Naive thymus-derived CD4-positive, alpha-beta T cell (primary cell): ENCODE measurements at regions of chr14 and their contacts with region 1.

Region 1: GRCh38 chr14:55129428-55130195 is 560 bp downstream of the LGALS3 start:
- DNase-seq: peak in 8 of 9 donors; percentile 5 to 59 (median 16)
- ATAC-seq: peak; percentile 64
- H3K4me3 ChIP-seq: peak overlapping the region; percentile 19
- H3K4me3 Mint-ChIP-seq: peak overlapping the region; percentile 4 to 85 (median 64)
- H3K27ac ChIP-seq: no peak overlapping the region
- H3K27ac Mint-ChIP-seq: peak overlapping the region in 1 of 9 donors; percentile 60
- H3K4me1 ChIP-seq: peaks cover 0 to 13% of the 10 kb centered on the region in 2 donors
- H3K4me1 Mint-ChIP-seq: peaks cover 0 to 45% (median 8%) of the 10 kb centered on the region in 7 donors
- H3K27me3 ChIP-seq: no peaks in the 10 kb centered on the region
- H3K27me3 Mint-ChIP-seq: peaks cover 17 to 60% (median 41%) of the 10 kb centered on the region in 5 donors

Region 2: GRCh38 chr14:54058505-54058904 is 1071.1 kb before region 1 on chr14:
- CTCF ChIA-PET with region 1: no interaction called
- POLR2A ChIA-PET with region 1: no interaction called
- intact Hi-C with region 1: no loop called
- DNase-seq: no peak
- ATAC-seq: no peak
- H3K4me3 ChIP-seq: no peak overlapping the region
- H3K4me3 Mint-ChIP-seq: no peak overlapping the region
- H3K27ac ChIP-seq: no peak overlapping the region
- H3K27ac Mint-ChIP-seq: no peak overlapping the region
- H3K4me1 ChIP-seq: no peaks in the 10 kb centered on the region
- H3K4me1 Mint-ChIP-seq: no peaks in the 10 kb centered on the region
- H3K27me3 ChIP-seq: no peaks in the 10 kb centered on the region
- H3K27me3 Mint-ChIP-seq: peaks cover 0 to 11% (median 0%) of the 10 kb centered on the region in 5 donors

Region 3: GRCh38 chr14:55085060-55085660 is 44.5 kb before region 1 on chr14:
- CTCF ChIA-PET with region 1: interaction called, 4 read pairs
- POLR2A ChIA-PET with region 1: no interaction called
- intact Hi-C with region 1: loop called in 1 of 2 experiments (anchors 2 kb)
- DNase-seq: no peak
- ATAC-seq: no peak
- H3K4me3 ChIP-seq: no peak overlapping the region
- H3K4me3 Mint-ChIP-seq: no peak overlapping the region
- H3K27ac ChIP-seq: no peak overlapping the region
- H3K27ac Mint-ChIP-seq: no peak overlapping the region
- H3K4me1 ChIP-seq: no peaks in the 10 kb centered on the region
- H3K4me1 Mint-ChIP-seq: peaks cover 0 to 4% (median 0%) of the 10 kb centered on the region in 7 donors
- H3K27me3 ChIP-seq: no peaks in the 10 kb centered on the region
- H3K27me3 Mint-ChIP-seq: peaks cover 0 to 11% (median 0%) of the 10 kb centered on the region in 5 donors

Region 4: DNA sequence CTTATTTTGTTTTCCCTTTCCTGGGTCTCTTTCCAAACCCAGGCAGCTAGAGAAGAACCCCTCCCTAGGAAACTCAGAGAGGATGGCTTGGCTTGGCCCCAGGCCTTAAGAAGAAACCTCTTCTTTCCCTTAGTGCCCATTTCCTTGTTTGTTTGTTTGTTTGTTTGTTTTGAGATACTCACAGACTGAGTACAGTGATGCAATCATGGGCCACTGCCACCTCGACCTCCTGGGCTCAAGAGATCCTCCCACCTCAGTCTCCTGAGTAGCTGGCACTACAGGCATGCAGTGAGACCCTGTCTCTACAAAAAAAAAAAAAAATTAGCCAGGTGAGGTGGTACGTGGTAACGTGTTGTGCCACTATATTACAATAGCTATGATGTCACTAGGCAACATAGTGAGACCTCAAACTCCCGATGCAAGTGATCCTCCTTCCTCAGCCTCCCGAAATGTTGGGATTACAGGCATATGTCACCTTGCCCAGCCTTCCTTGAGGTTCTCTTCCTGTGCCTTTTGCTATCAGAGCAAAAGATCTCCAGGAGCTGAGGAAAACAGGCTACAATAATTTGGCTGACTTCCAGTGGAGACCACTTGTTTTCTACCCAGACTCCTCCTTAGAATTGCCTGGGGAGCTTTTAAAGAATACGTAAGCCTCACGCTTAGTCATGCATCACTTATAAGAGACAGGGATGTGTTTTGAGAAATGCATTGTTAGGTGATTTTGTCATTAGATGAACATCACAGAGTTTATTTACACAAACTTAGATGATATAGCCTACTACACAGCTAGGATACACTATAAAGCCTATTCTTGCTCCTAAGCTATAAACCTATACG is 35.1 kb before region 1 on chr14:
- CTCF ChIA-PET with region 1: no interaction called
- POLR2A ChIA-PET with region 1: no interaction called
- intact Hi-C with region 1: loop called (anchors 1 to 2 kb)
- DNase-seq: no peak
- ATAC-seq: no peak
- H3K4me3 ChIP-seq: no peak overlapping the region
- H3K4me3 Mint-ChIP-seq: no peak overlapping the region
- H3K27ac ChIP-seq: no peak overlapping the region
- H3K27ac Mint-ChIP-seq: no peak overlapping the region
- H3K4me1 ChIP-seq: peaks cover 0 to 14% of the 10 kb centered on the region in 2 donors
- H3K4me1 Mint-ChIP-seq: peaks cover 12 to 43% (median 16%) of the 10 kb centered on the region in 7 donors
- H3K27me3 ChIP-seq: no peaks in the 10 kb centered on the region
- H3K27me3 Mint-ChIP-seq: peaks cover 0 to 4% (median 0%) of the 10 kb centered on the region in 5 donors

Region 5: DNA sequence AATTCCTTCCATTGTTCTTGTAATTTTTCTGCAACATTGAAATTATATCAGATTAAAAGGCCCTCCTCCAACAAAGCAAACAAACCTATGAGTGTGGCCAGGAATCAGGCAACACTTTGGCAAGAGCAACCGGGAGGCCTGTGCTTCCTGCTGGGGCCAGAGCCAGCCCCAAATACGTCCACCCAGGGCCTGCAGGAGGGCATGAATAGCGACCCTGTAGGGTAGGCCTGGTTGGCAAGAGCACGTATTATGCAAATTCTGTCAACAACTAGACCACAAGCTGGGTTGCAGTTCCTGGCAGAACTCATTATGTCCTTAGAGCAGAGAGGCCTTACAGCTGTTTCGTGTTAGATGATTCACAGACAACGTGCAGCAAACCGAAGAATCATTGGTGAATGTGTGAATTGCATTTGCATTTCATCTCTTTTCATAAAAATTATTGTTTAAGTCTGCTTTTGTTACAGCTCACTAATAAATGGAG is 27.4 kb before region 1 on chr14:
- CTCF ChIA-PET with region 1: no interaction called
- POLR2A ChIA-PET with region 1: no interaction called
- intact Hi-C with region 1: loop called in 1 of 2 experiments (anchors 1 kb)
- DNase-seq: peak in 4 of 9 donors; percentile 7 to 43 (median 10)
- ATAC-seq: peak; percentile 81
- H3K4me3 ChIP-seq: no peak overlapping the region
- H3K4me3 Mint-ChIP-seq: peak overlapping the region in 5 of 10 donors; percentile 25 to 66 (median 40)
- H3K27ac ChIP-seq: peak overlapping the region; percentile 41
- H3K27ac Mint-ChIP-seq: peak overlapping the region; percentile 26 to 97 (median 82)
- H3K4me1 ChIP-seq: peaks cover 10 to 45% of the 10 kb centered on the region in 2 donors
- H3K4me1 Mint-ChIP-seq: peaks cover 28 to 56% (median 32%) of the 10 kb centered on the region in 7 donors
- H3K27me3 ChIP-seq: no peaks in the 10 kb centered on the region
- H3K27me3 Mint-ChIP-seq: no peaks in the 10 kb centered on the region

Region 6: DNA sequence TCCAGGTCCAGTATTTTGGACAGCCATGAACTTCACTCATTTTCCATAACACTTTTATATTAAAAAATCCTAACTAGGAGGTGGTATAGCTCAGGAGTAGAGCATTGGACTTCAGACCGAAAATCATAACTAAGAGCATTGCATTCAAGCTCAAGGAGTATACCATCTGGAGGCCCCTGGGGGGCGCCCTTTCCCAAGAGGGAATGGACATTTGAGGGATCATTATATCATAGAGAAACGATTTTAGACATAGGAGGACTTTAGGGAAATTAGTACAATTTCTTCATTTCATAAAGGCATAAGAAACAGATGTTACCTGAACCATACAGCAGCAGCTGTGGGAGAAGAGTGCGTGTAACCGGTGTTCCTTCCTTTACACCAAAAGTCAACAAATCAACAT is 287.3 kb after region 1 on chr14:
- CTCF ChIA-PET with region 1: no interaction called
- POLR2A ChIA-PET with region 1: no interaction called
- intact Hi-C with region 1: no loop called
- DNase-seq: no peak
- ATAC-seq: no peak
- H3K4me3 ChIP-seq: no peak overlapping the region
- H3K4me3 Mint-ChIP-seq: peak overlapping the region in 1 of 10 donors; percentile 20
- H3K27ac ChIP-seq: no peak overlapping the region
- H3K27ac Mint-ChIP-seq: no peak overlapping the region
- H3K4me1 ChIP-seq: peaks cover 0 to 9% of the 10 kb centered on the region in 2 donors
- H3K4me1 Mint-ChIP-seq: peaks cover 0 to 13% (median 11%) of the 10 kb centered on the region in 7 donors
- H3K27me3 ChIP-seq: no peaks in the 10 kb centered on the region
- H3K27me3 Mint-ChIP-seq: peaks cover 0 to 5% (median 0%) of the 10 kb centered on the region in 5 donors

Region 7: GRCh38 chr14:55547650-55548315 is 418.2 kb after region 1 on chr14:
- CTCF ChIA-PET with region 1: no interaction called
- POLR2A ChIA-PET with region 1: no interaction called
- intact Hi-C with region 1: no loop called
- DNase-seq: no peak
- ATAC-seq: no peak
- H3K4me3 ChIP-seq: no peak overlapping the region
- H3K4me3 Mint-ChIP-seq: no peak overlapping the region
- H3K27ac ChIP-seq: no peak overlapping the region
- H3K27ac Mint-ChIP-seq: no peak overlapping the region
- H3K4me1 ChIP-seq: no peaks in the 10 kb centered on the region
- H3K4me1 Mint-ChIP-seq: peaks cover 0 to 5% (median 0%) of the 10 kb centered on the region in 7 donors
- H3K27me3 ChIP-seq: no peaks in the 10 kb centered on the region
- H3K27me3 Mint-ChIP-seq: peaks cover 0 to 2% (median 0%) of the 10 kb centered on the region in 5 donors